Dendritic cell treated with granulocyte-macrophage colony-stimulating factor and Interleukin-4, amounts not matched to agents 40 ng/mL and 50 ng/mL, for 4 days (primary cell): ENCODE measurements at regions of chr4 and their contacts with region 1.

Region 1: GRCh38 chr4:139301113-139301820 is at the start of gene NAA15:
- H3K4me3 Mint-ChIP-seq: peak within 1 kb of the TSS; percentile 89
- H3K27ac Mint-ChIP-seq: peak within 1 kb of the TSS; percentile 92
- H3K4me1 Mint-ChIP-seq: peaks cover 32% of the 10 kb centered on the region
- H3K27me3 Mint-ChIP-seq: no peaks in the 10 kb centered on the region

Region 2: GRCh38 chr4:139083956-139084803 is 217.1 kb before region 1 on chr4:
- intact Hi-C with region 1: loop called (anchors 5 kb)
- H3K4me3 Mint-ChIP-seq: peak overlapping the region; percentile 100
- H3K27ac Mint-ChIP-seq: peak overlapping the region; percentile 100
- H3K4me1 Mint-ChIP-seq: peaks cover 16% of the 10 kb centered on the region
- H3K27me3 Mint-ChIP-seq: no peaks in the 10 kb centered on the region

Region 3: GRCh38 chr4:140243278-140243753 is 942.0 kb after region 1 on chr4:
- intact Hi-C with region 1: no loop called
- H3K4me3 Mint-ChIP-seq: peak overlapping the region; percentile 33
- H3K27ac Mint-ChIP-seq: peak overlapping the region; percentile 56
- H3K4me1 Mint-ChIP-seq: peaks cover 55% of the 10 kb centered on the region
- H3K27me3 Mint-ChIP-seq: no peaks in the 10 kb centered on the region